Activated naive CD8-positive, alpha-beta T cell treated with anti-CD3 and anti-CD28 coated beads, Interleukin-2, amount 10 ng/mL, durations not matched to agents 7 days and 5 days (primary cell): ENCODE measurements at regions of chr9 and their contacts with region 1.

Region 1: GRCh38 chr9:129884220-129885017 is 49.2 kb downstream of the USP20 start:
- DNase-seq: peak; percentile 96
- ATAC-seq: peak; percentile 58
- H3K4me3 Mint-ChIP-seq: peak overlapping the region; percentile 91
- H3K27ac Mint-ChIP-seq: peak overlapping the region; percentile 97
- H3K4me1 Mint-ChIP-seq: peaks cover 45% of the 10 kb centered on the region
- H3K27me3 Mint-ChIP-seq: no peaks in the 10 kb centered on the region

Region 2: GRCh38 chr9:129835021-129835871 is 49.2 kb before region 1 on chr9 and contains the starts of genes C9orf78 and USP20:
- POLR2A ChIA-PET with region 1: interaction called, 39 read pairs
- DNase-seq: peak; percentile 100
- ATAC-seq: peak; percentile 91
- H3K4me3 Mint-ChIP-seq: peak within 1 kb of the TSS; percentile 95
- H3K27ac Mint-ChIP-seq: peak within 1 kb of the TSS; percentile 96
- H3K4me1 Mint-ChIP-seq: peaks cover 49% of the 10 kb centered on the region
- H3K27me3 Mint-ChIP-seq: no peaks in the 10 kb centered on the region
- total RNA-seq, gene C9orf78: 71.4 to 73.4 TPM
- total RNA-seq, gene USP20: 107 to 111 TPM

Region 3: GRCh38 chr9:129863059-129863690 is 21.2 kb before region 1 on chr9:
- POLR2A ChIA-PET with region 1: interaction called, 173 read pairs
- DNase-seq: peak; percentile 85
- ATAC-seq: peak; percentile 89
- H3K4me3 Mint-ChIP-seq: peak overlapping the region; percentile 73
- H3K27ac Mint-ChIP-seq: peak overlapping the region; percentile 89
- H3K4me1 Mint-ChIP-seq: peaks cover 61% of the 10 kb centered on the region
- H3K27me3 Mint-ChIP-seq: no peaks in the 10 kb centered on the region

Region 4: GRCh38 chr9:129944506-129945116 is 60.2 kb after region 1 on chr9:
- POLR2A ChIA-PET with region 1: interaction called, 11 read pairs
- DNase-seq: no peak
- ATAC-seq: peak; percentile 97
- H3K4me3 Mint-ChIP-seq: peak overlapping the region; percentile 68
- H3K27ac Mint-ChIP-seq: peak overlapping the region; percentile 90
- H3K4me1 Mint-ChIP-seq: peaks cover 38% of the 10 kb centered on the region
- H3K27me3 Mint-ChIP-seq: no peaks in the 10 kb centered on the region